ENCODE measurements at regions of chr3 and their contacts with region 1.

Region 1: GRCh38 chr3:160941885-160942494 is 163.2 kb downstream of the B3GALNT1 start:
- DNase-seq: peak; percentile 58 to 62
- H3K4me3 ChIP-seq: no peak overlapping the region
- H3K27ac ChIP-seq: no peak overlapping the region
- H3K4me1 ChIP-seq: no peaks in the 10 kb centered on the region
- H3K27me3 ChIP-seq: no peaks in the 10 kb centered on the region
- CTCF ChIP-seq: peak; percentile 70 to 86 (median 83)
- POLR2A ChIP-seq: no peak

Region 2: GRCh38 chr3:160707187-160707794 is 234.7 kb before region 1 on chr3:
- intact Hi-C with region 1: loop called (anchors 10 kb)
- DNase-seq: no peak
- H3K4me3 ChIP-seq: no peak overlapping the region
- H3K27ac ChIP-seq: no peak overlapping the region
- H3K4me1 ChIP-seq: no peaks in the 10 kb centered on the region
- H3K27me3 ChIP-seq: peaks cover 0 to 5% of the 10 kb centered on the region in 2 donors
- CTCF ChIP-seq: peak in 2 of 3 donors; percentile 46 to 52
- POLR2A ChIP-seq: no peak

Region 3: DNA sequence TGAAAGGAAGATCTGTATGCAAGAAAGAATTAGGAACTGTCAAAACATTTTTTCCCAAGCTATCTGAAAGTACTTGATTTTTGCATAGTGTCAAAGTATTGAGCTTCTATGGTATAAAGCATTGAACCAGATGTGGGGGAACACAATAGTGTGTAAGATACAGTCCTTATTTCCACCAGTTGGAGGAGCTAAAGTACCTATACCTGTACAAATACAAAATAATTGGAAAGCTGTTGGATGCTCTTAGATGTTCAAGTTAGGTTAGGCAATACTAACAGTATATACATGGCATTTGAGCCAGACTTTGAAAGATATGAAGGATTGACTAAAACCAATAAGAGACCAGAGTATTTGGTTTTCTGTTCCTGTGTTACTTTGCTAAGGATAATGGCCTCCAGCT is 14.8 kb after region 1 on chr3:
- intact Hi-C with region 1: no loop called
- DNase-seq: no peak
- H3K4me3 ChIP-seq: no peak overlapping the region
- H3K27ac ChIP-seq: no peak overlapping the region
- H3K4me1 ChIP-seq: no peaks in the 10 kb centered on the region
- H3K27me3 ChIP-seq: no peaks in the 10 kb centered on the region
- CTCF ChIP-seq: no peak
- POLR2A ChIP-seq: no peak

Measured in breast epithelium (tissue), 4 donors.